HEK293T (cell line): ENCODE measurements at regions of chr19 and their contacts with region 1.

Region 1: DNA sequence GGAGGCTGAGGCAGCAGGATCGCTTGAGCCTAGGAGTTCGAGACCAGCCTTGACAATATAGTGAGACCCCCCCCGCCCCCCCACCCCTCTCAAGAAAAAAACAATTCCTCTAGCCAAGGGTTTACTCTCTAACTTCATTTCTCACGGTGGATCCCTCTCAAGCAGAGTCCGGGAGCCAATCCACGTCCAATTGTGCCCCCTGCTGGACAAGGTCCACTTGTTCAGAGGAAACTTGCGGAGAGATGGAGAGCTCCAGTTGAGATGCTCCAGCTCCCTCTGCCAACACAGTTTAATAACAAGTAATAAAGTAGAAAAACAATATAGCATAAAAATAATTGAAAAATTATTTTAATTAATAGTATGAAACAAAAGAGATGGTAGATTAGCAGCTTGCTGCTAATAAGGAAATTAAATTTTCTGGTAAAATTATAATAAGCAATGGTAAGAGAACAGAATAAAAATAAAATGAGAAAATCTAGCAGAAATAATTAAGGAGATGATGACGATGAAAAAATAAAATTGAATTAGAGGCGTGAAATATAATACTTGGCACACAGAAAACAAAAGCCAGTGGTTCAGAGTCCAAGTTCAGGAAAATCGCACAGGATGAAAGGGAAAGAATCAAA is 14.5 kb upstream of the SIGLEC14 start:
- DNase-seq: peak; percentile 64

Region 2: GRCh38 chr19:51473009-51473707 is 187.9 kb before region 1 on chr19:
- CTCF ChIA-PET with region 1: interaction called, 14 read pairs
- POLR2A ChIA-PET with region 1: no interaction called
- DNase-seq: peak; percentile 68

Region 3: GRCh38 chr19:51514866-51515481 is 146.1 kb before region 1 on chr19:
- CTCF ChIA-PET with region 1: no interaction called
- POLR2A ChIA-PET with region 1: no interaction called
- DNase-seq: peak; percentile 46

Region 4: DNA sequence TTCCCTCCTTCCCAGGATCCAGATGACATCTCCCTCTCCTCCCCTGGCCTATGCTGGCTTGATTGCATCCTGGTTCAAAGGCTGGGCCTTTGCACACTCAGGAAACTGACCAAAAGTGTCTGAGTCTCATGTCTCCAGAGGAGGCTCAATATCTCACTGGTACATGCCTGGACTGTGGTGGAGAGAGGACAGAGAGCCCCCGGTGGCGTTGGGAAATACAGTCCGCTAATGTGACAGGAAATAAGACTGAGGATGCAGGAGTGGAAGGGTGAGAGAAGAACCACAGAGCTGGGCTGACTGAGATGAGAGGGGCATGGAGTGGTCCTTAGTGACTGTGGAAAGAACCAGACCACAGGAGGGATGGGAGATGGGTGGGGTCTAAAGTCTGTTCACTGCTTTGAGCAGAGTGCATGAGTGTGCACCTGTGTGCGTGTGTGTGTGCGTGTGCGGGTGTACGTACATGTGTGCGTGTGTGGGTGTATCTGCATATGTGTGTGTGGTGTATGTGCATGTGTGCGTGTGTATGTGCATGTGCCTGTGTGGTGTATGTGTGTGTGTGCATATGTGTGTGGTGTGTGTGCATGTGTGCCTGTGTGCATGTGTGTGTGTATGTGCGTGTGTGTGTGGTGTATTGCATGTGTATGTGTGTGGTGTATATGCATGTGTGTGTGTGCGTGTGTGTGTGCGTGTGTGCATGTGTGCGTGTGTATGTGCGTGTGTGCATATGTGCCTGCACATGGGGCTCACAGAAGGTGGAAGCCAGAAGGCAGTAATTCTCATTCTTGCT is 32.7 kb before region 1 on chr19:
- CTCF ChIA-PET with region 1: no interaction called
- POLR2A ChIA-PET with region 1: no interaction called
- DNase-seq: no peak

Region 5: GRCh38 chr19:51688672-51689571 is 27.8 kb after region 1 on chr19:
- CTCF ChIA-PET with region 1: interaction called, 3 read pairs
- POLR2A ChIA-PET with region 1: interaction called, 11 read pairs
- DNase-seq: peak; percentile 80

Region 6: GRCh38 chr19:51724543-51724942 is 63.5 kb after region 1 on chr19:
- CTCF ChIA-PET with region 1: no interaction called
- POLR2A ChIA-PET with region 1: no interaction called
- DNase-seq: no peak